ENCODE measurements at regions of chr6 and their contacts with region 1.

Region 1: GRCh38 chr6:131549811-131550210 is 23.2 kb upstream of the ARG1 start:
- DNase-seq: no peak
- ATAC-seq: no peak
- H3K4me3 Mint-ChIP-seq: no peak overlapping the region
- H3K27ac Mint-ChIP-seq: no peak overlapping the region
- H3K4me1 Mint-ChIP-seq: no peaks in the 10 kb centered on the region
- H3K27me3 Mint-ChIP-seq: peaks cover 5% of the 10 kb centered on the region
- CTCF ChIP-seq: no peak

Region 2: GRCh38 chr6:131561925-131562707 is 12.3 kb after region 1 on chr6:
- CTCF ChIA-PET with region 1: no interaction called
- POLR2A ChIA-PET with region 1: no interaction called
- intact Hi-C with region 1: loop called (anchors 1 kb)
- DNase-seq: no peak
- ATAC-seq: no peak
- H3K4me3 Mint-ChIP-seq: no peak overlapping the region
- H3K27ac Mint-ChIP-seq: no peak overlapping the region
- H3K4me1 Mint-ChIP-seq: no peaks in the 10 kb centered on the region
- H3K27me3 Mint-ChIP-seq: no peaks in the 10 kb centered on the region
- CTCF ChIP-seq: no peak

Region 3: DNA sequence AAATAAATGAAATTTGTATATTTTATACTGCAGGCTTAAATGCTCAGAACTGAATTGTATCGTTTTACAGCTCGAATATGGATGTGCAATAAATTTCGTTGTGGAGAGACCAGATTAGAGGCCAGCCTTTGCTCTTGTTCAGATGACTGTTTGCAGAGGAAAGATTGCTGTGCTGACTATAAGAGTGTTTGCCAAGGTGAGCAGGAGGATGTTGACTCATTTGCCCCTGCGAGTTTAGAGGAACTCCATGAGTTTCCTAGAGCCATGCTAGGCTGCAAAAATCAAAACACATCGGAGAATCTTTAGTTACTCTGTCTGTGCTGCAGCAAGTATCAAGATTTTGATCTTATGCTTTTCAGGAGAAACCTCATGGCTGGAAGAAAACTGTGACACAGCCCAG is 102.7 kb after region 1 on chr6:
- CTCF ChIA-PET with region 1: no interaction called
- POLR2A ChIA-PET with region 1: no interaction called
- intact Hi-C with region 1: no loop called
- DNase-seq: no peak
- ATAC-seq: no peak
- H3K4me3 Mint-ChIP-seq: no peak overlapping the region
- H3K27ac Mint-ChIP-seq: no peak overlapping the region
- H3K4me1 Mint-ChIP-seq: no peaks in the 10 kb centered on the region
- H3K27me3 Mint-ChIP-seq: peaks cover 2% of the 10 kb centered on the region
- CTCF ChIP-seq: no peak

Measured in activated CD8-positive, alpha-beta T cell treated with anti-CD3 and anti-CD28 coated beads for 36 hours (primary cell).